Activated B cell treated with CpG ODN at 0.5 μM for 24 hours (primary cell): ENCODE measurements at regions of chr7 and their contacts with region 1.

Region 1: DNA sequence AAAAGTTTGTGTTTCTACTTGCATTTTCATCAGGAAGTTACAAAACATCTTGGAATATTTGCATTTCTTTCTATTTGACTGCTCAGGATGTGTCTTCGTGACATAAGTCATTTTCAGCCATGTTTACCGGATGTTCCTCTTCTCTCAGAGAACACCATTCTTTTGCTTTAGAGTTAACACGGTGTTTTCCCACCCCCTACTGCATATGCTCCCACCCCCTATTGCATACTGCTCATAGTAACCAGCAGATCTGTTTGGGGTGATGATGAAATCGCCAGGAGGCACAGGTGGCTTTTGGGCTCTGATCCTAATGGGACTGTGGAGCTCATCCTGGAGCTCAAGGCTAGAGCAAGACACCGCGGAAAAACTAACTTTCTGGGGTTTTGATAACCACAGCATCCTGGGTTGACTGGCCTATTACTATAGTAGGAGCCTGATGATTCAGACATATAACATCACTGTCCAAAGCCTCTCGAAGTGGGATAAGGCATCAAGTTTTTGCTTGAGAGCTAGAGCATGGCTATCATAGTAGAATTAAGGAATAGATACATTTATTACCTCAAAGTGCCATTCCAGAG is 65.1 kb upstream of the BET1 start:
- DNase-seq: no peak
- ATAC-seq: peak; percentile 83
- H3K4me3 Mint-ChIP-seq: peak overlapping the region; percentile 19
- H3K27ac Mint-ChIP-seq: peak overlapping the region; percentile 71
- H3K4me1 Mint-ChIP-seq: peaks cover 36% of the 10 kb centered on the region
- H3K27me3 Mint-ChIP-seq: no peaks in the 10 kb centered on the region
- CTCF ChIP-seq: no peak

Region 2: DNA sequence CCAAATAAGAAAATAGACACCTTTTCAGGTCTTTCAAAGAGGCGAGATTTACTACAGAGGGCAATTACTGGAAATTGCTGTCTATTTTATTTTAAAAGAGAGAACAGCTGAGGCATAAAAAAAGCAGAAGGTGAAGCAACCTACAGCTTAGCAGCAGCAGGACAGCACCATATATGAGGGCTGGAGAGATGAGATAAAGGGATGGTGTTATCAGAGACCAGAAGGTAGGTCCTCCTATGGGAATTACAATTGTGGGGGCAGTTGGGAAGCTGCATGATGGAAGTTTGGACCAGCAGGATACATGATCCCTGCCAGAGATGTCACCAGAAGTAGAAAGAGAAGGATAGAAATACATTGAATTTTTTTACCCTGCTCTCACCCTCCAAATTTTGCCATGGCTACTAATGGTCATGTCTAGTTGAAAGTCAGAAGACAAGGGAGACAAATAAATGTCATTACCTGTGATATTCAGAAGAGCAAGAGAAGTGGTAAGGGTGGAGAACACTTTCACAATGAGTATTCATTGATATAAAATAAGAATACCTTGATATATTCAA is 417.6 kb before region 1 on chr7:
- CTCF ChIA-PET with region 1: no interaction called
- POLR2A ChIA-PET with region 1: interaction called, 10 read pairs
- intact Hi-C with region 1: no loop called
- DNase-seq: no peak
- ATAC-seq: no peak
- H3K4me3 Mint-ChIP-seq: no peak overlapping the region
- H3K27ac Mint-ChIP-seq: no peak overlapping the region
- H3K4me1 Mint-ChIP-seq: no peaks in the 10 kb centered on the region
- H3K27me3 Mint-ChIP-seq: no peaks in the 10 kb centered on the region
- CTCF ChIP-seq: no peak

Region 3: DNA sequence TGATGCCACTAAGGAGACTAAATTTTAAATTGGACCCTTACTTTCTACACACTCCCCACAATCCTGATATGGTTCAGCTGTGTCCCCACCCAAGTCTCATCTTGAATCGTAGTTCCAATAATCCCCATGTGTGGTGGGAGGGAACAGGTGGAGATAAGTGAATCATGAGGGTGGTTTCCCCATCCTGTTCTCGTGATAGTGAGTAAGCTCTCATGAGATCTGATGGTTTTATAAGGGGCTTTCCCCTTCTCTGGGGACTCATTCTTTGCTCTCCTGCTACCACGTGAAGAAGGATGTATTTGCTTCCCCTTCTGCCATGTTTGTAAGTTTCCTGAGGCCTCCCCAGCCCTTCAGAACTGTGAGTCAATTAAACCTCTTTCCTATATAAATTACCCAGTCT is 46.7 kb before region 1 on chr7:
- CTCF ChIA-PET with region 1: no interaction called
- POLR2A ChIA-PET with region 1: no interaction called
- intact Hi-C with region 1: loop called (anchors 5 kb)
- DNase-seq: no peak
- ATAC-seq: peak; percentile 84
- H3K4me3 Mint-ChIP-seq: peak overlapping the region; percentile 62
- H3K27ac Mint-ChIP-seq: peak overlapping the region; percentile 92
- H3K4me1 Mint-ChIP-seq: peaks cover 23% of the 10 kb centered on the region
- H3K27me3 Mint-ChIP-seq: no peaks in the 10 kb centered on the region
- CTCF ChIP-seq: no peak